Activated CD8-positive, alpha-beta T cell treated with anti-CD3 and anti-CD28 coated beads, Interleukin-2, amount 10 ng/mL, durations not matched to agents 7 days and 5 days (primary cell): ENCODE measurements at regions of chr5 and their contacts with region 1.

Region 1: GRCh38 chr5:35777358-35778087 is 79.2 kb upstream of the IL7R start:
- DNase-seq: peak; percentile 86
- ATAC-seq: peak; percentile 64
- H3K4me3 Mint-ChIP-seq: no peak overlapping the region
- H3K27ac Mint-ChIP-seq: peak overlapping the region; percentile 45
- H3K4me1 Mint-ChIP-seq: peaks cover 47% of the 10 kb centered on the region
- H3K27me3 Mint-ChIP-seq: no peaks in the 10 kb centered on the region

Region 2: DNA sequence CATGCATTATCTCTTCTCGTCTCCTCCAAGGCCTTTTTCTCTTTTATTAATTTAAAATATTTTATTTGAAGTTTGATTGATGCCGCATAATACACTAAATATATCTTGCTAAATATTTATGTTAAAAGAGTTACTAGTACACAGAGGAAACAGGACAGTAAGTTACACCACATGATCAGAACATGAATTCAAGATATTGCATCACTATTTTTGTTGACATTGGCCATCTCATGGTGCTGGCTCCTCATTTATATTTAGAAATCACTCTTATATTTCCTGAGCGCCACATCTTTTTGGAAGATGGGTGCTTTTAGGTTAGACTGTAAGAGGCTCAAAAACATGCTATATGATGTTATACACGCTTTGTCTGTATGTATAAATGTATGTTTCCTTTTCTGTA is 136.9 kb before region 1 on chr5:
- CTCF ChIA-PET with region 1: no interaction called
- POLR2A ChIA-PET with region 1: no interaction called
- DNase-seq: no peak
- ATAC-seq: no peak
- H3K4me3 Mint-ChIP-seq: no peak overlapping the region
- H3K27ac Mint-ChIP-seq: no peak overlapping the region
- H3K4me1 Mint-ChIP-seq: no peaks in the 10 kb centered on the region
- H3K27me3 Mint-ChIP-seq: no peaks in the 10 kb centered on the region

Region 3: GRCh38 chr5:35651002-35651756 is 126.3 kb before region 1 on chr5:
- CTCF ChIA-PET with region 1: interaction called, 40 read pairs
- POLR2A ChIA-PET with region 1: no interaction called
- DNase-seq: peak; percentile 76
- ATAC-seq: peak; percentile 97
- H3K4me3 Mint-ChIP-seq: no peak overlapping the region
- H3K27ac Mint-ChIP-seq: no peak overlapping the region
- H3K4me1 Mint-ChIP-seq: peaks cover 6% of the 10 kb centered on the region
- H3K27me3 Mint-ChIP-seq: no peaks in the 10 kb centered on the region

Region 4: DNA sequence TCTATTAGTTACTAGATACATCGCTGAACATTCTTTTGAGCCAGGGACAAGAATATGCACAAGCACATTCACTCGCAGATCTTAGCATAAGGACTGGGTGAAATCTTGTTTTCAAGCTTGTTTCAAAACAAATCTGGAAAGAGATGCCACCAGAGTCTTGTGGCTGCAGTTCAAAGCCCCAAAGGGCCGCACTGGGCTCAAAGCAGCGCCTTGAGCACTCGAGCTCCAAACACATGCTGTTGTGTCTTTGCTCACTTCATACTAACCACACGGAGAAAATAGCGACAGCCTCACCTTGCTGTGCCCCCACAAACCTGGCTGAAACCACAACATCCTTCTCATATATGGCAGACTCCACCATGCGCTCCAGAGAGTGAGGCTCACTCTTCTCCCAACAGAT is 45.0 kb after region 1 on chr5:
- CTCF ChIA-PET with region 1: interaction called, 47 read pairs
- POLR2A ChIA-PET with region 1: interaction called, 12 read pairs
- DNase-seq: peak; percentile 78
- ATAC-seq: peak; percentile 68
- H3K4me3 Mint-ChIP-seq: peak overlapping the region; percentile 30
- H3K27ac Mint-ChIP-seq: peak overlapping the region; percentile 75
- H3K4me1 Mint-ChIP-seq: peaks cover 85% of the 10 kb centered on the region
- H3K27me3 Mint-ChIP-seq: no peaks in the 10 kb centered on the region

Region 5: GRCh38 chr5:35852084-35852734 is 74.7 kb after region 1 on chr5:
- CTCF ChIA-PET with region 1: interaction called, 62 read pairs
- POLR2A ChIA-PET with region 1: interaction called, 14 read pairs
- DNase-seq: peak; percentile 49
- ATAC-seq: peak; percentile 6
- H3K4me3 Mint-ChIP-seq: peak overlapping the region; percentile 72
- H3K27ac Mint-ChIP-seq: peak overlapping the region; percentile 94
- H3K4me1 Mint-ChIP-seq: peaks cover 75% of the 10 kb centered on the region
- H3K27me3 Mint-ChIP-seq: no peaks in the 10 kb centered on the region

Region 6: GRCh38 chr5:35881758-35882157 is 104.2 kb after region 1 on chr5:
- CTCF ChIA-PET with region 1: interaction called, 10 read pairs
- POLR2A ChIA-PET with region 1: no interaction called
- DNase-seq: no peak
- ATAC-seq: no peak
- H3K4me3 Mint-ChIP-seq: no peak overlapping the region
- H3K27ac Mint-ChIP-seq: no peak overlapping the region
- H3K4me1 Mint-ChIP-seq: peaks cover 58% of the 10 kb centered on the region
- H3K27me3 Mint-ChIP-seq: no peaks in the 10 kb centered on the region